GM10248 (cell line): ENCODE measurements at regions of chr22 and their contacts with region 1.

Region 1: DNA sequence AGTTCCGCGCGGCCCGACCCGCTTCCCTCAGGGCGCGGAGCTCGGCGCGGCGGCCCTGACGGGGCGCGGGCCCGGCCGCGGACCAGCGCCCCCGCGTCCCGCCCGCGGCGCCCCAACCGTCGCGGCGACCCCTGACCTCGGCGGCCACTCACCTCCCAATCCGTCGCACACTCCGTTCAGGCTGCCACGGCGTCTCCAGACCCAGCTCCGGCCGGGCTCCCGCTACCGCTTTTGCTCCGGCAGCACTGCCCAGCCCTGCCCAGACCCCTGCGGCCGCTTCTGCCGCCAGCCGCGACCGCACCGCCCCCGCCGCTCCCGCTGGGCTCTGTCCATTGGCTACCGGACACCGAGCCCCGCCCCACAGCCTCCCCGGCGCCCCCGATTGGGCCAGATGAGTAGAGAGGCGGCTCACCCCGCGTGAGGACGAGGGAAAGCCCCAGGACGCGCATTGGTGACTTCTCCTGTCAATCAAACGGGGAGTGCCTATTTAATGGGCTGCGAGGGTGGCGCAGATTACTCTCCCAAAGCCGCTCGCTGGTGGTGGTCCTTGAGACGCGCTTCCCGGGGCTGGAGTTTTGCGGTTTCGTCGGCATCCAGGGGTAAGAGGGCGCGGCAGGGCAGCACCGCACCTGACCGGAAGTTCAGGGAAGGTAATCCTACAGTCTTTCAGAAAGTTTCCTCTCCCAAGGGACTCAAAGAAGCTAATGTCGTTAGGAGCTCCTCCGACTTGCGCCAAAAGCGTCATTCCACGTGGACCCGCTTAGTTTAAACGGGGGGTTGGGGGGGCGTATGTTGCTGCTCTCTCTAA is at the start of gene PACSIN2:
- DNase-seq: peak; percentile 100
- CTCF ChIP-seq: no peak

Region 2: DNA sequence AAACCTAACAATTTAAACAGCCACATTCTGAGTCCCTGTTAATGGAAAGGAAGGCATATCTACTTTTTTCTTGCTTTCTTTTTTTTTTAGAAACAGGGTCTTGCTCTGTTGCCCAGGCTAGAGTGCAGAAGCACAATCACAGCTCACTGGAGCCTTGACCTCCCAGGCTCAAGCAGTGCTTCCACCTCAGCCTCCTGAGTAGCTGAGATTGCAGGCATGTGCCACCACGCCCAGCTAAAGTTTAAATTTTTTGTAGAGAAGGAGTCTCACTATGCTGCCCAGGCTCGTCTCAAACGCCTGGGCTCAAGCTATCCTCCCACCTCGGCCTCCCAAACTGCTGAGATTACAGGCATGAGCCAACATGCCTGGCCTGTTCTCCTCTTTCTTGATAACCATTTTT is 183.4 kb before region 1 on chr22:
- CTCF ChIA-PET with region 1: no interaction called
- POLR2A ChIA-PET with region 1: interaction called, 11 read pairs
- DNase-seq: no peak
- CTCF ChIP-seq: no peak

Region 3: DNA sequence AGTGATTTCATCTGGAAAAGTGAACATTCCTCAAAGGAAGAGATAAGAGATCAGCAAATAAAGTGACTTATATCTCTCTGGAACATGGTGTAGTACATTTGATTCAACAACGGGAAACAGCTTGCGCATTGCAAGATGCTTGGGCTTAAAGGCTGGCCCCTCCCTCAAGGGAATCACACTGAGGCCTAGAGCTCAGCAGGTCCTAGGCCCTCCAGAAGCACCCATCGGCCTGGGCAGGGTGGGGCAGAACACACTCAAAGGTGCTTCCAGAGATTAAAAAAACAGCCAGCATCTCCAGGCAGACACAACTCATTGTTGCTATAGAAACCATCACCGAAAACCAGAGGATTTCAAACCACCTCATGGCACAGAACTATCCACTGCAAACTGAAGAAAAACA is 89.0 kb before region 1 on chr22:
- CTCF ChIA-PET with region 1: interaction called, 4 read pairs
- POLR2A ChIA-PET with region 1: interaction called, 18 read pairs
- DNase-seq: no peak
- CTCF ChIP-seq: no peak

Region 4: GRCh38 chr22:43001271-43002201 is 13.5 kb before region 1 on chr22:
- CTCF ChIA-PET with region 1: interaction called, 14 read pairs
- POLR2A ChIA-PET with region 1: interaction called, 39 read pairs
- DNase-seq: no peak
- CTCF ChIP-seq: no peak

Region 5: GRCh38 chr22:43060183-43060582 is 45.1 kb after region 1 on chr22:
- CTCF ChIA-PET with region 1: no interaction called
- POLR2A ChIA-PET with region 1: no interaction called
- DNase-seq: peak; percentile 52
- CTCF ChIP-seq: peak; percentile 49

Region 6: DNA sequence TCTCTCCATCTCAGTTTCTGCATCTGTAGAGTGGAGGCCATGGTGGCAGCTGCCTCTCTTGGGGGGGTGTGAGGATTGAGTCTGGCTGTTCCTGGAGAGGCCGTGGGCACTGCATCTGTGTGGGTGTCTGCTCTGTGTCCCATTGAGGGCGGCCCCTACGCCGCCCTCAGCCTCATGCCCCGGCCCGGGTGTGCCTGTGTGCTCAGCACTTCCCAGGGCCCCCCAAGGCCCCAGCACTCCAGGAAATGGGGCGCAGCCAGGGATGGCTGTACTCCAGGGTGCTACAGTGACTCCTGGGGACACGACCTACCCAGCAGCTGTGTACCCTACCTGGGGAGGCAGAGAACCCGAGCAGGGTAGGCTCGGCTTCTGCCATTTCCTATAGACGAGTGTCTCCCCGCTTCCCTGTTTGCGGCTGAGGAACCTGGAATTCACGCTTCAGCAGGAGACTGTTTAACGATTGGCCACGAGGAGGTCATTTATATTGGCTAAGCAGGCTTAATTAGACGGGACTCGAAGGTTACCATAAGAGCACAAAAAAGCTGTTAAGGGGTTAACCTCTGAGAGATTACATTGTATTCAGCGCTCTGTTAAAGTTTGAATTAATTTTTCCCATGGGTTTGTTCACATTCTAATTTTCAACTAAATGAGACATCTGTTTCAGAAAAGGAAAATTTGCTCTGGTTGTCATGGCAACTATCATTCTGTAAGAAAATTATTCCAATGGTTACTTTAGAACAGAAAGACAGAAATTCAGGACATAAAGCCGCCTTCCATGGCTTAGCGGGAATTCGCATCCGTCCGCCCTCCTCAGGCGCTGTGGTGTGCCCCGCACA is 473.2 kb after region 1 on chr22:
- CTCF ChIA-PET with region 1: no interaction called
- POLR2A ChIA-PET with region 1: no interaction called
- DNase-seq: no peak
- CTCF ChIP-seq: no peak